ENCODE measurements at regions of chr17 and their contacts with region 1.

Region 1: DNA sequence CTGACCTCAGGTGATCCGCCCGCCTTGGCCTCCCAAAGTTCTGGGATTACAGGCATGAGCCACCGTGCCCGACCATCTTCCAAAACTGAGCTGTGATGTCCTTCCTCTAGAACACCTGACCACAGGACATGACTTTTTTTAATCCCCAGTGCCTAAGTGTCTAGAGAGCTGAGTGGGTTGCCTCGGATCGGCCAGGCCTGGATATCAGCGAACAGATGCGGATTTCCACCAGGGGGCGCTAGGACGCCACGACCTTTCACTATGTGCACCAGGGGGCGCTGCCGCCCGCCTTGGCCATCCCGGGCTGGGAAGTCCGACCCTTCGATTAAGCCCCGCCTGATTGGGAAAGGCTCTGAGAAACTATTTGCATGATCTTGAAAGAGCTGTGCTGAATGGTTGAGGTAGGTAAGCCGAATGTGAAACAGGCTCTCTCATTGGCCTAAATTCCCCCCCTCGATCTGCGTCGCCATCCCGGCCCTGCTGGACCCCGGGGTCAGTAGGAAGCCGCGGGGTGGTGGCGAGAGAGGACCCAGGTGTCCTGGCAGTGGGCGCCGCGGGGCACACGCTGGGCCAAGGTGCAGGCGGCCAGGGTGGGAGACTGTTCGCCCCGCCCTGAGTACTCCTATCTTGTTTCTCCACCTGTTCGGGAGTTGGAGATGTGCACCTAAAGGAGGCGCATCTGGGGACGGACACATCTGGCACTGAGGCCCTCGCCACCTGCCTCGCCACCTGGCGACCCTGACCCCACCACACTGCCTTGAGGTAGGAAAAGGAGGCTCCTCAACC is at the start of gene ACBD4:
- DNase-seq: peak; percentile 81 to 98 (median 90)
- ATAC-seq: peak; percentile 90
- H3K4me3 ChIP-seq: peak within 1 kb of the TSS; percentile 52
- H3K27ac ChIP-seq: peak within 1 kb of the TSS; percentile 74; the same call in 2 of the 3 replicates
- H3K4me1 ChIP-seq: peaks cover 11 to 49% of the 10 kb centered on the region in 2 experiments
- H3K27me3 ChIP-seq: no peaks in the 10 kb centered on the region
- CTCF ChIP-seq: peak; percentile 100
- EP300 ChIP-seq: peak; percentile 53; the same call in 1 of the 2 replicates
- POLR2A ChIP-seq: peak; percentile 55; the same call in 1 of the 2 replicates
- RAD21 ChIP-seq: peak; percentile 100
- polyA plus RNA-seq, gene ACBD4: 0.14 to 0.15 TPM

Region 2: GRCh38 chr17:44919885-44920564 is 215.4 kb before region 1 on chr17:
- CTCF ChIA-PET with region 1: interaction called, 4 read pairs
- POLR2A ChIA-PET with region 1: no interaction called
- in situ Hi-C with region 1: no loop called
- intact Hi-C with region 1: loop called (anchors 2 kb)
- DNase-seq: peak; percentile 78 to 86 (median 81)
- ATAC-seq: peak; percentile 96
- H3K4me3 ChIP-seq: no peak overlapping the region
- H3K27ac ChIP-seq: no peak overlapping the region
- H3K4me1 ChIP-seq: peaks cover 2 to 12% of the 10 kb centered on the region in 2 experiments; a peak in 4 of 5 replicates
- H3K27me3 ChIP-seq: peaks cover 2 to 13% of the 10 kb centered on the region in 2 experiments; a peak in 2 of 5 replicates
- CTCF ChIP-seq: peak; percentile 93 to 95 (median 93)
- EP300 ChIP-seq: no peak
- POLR2A ChIP-seq: no peak
- RAD21 ChIP-seq: peak; percentile 84 to 92

Region 3: DNA sequence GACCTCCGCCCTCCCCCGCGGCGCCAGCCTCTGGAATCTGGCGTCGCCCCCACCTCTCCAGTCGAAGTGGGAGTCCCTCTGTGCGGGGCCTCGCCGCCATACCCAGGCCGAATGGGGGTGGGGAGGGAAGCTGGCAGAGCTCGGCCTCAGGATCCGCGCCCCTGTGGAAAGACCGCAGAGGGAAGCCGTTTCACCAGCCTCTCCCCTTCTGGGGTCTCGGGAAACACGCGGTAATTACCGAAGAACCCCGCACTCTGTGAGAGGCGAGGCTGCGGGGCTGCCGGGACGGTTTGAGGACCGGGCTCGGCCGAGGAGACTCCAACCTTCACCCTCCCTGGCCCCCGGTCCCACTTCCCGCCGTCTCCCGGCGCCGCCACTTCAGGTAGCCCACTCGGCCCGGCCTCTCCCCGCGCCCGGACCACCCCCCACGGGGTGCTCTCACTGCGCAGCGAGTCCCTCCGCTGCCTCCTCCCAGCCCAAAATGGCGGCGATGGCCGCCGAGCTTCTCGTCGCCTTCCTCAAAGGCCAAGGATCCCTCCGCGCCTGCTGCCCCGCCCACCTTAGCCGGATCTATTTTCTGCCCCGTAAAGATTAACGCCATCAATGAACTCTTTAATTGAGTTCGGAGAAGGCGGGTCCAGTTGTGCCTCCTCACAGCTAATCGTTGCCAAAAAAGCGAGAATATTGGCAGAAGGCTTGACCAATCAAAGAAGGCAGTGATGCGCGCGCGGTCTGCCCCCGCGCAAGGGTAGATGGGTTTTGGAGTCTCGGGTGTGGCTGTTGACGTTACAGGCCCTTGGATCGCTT is 25.8 kb after region 1 on chr17:
- CTCF ChIA-PET with region 1: interaction called, 19 read pairs
- POLR2A ChIA-PET with region 1: interaction called, 7 read pairs
- in situ Hi-C with region 1: no loop called
- intact Hi-C with region 1: no loop called
- DNase-seq: peak; percentile 90 to 100 (median 95)
- ATAC-seq: peak; percentile 92
- H3K4me3 ChIP-seq: peak overlapping the region; percentile 86
- H3K27ac ChIP-seq: peak overlapping the region; percentile 98
- H3K4me1 ChIP-seq: peaks cover 38 to 39% of the 10 kb centered on the region in 2 experiments
- H3K27me3 ChIP-seq: no peaks in the 10 kb centered on the region
- CTCF ChIP-seq: no peak; a peak in 3 of 6 replicates
- EP300 ChIP-seq: peak; percentile 23
- POLR2A ChIP-seq: peak; percentile 94
- RAD21 ChIP-seq: 0 out of 4 replicates have a peak, but pooled peaks of 1 of the 2 experiments have one; percentile 4

Region 4: DNA sequence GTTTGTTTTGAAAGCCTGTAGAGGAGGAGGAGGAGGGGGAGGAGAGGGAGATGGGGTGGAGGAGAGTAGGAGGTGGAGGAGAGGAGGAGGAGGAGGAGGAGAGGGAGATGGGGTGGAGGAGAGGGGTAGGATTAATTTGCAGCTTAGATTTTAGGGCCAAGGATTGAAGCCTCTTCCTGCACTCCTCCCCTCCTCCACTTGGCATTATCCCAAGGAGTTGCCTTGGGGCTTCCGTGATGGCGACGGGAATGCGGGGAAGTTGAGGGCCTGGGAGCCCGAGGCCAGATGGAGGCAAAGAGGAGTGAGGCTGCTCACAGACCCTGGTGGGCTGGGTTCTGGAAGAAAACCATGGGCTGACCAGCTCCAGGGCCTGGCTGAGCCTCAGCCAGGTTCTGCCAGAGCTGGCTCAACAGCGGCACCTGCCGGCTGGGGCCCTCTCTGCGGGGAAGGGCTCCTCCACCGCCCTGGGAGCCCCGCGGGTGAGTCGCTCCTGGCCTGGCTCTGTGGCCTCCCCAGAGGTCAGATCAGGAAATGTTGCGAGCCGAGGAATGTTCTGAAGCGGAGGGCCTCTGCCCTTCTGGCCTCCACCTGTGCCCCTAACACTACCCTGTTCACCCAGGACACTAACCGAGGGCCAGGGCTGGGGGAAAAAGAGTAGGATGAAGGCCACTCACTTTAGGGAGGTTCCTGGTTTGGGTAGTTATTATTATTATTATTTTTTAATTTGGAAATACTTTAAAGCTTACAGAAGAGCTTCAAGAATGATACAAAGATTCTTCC is 62.4 kb after region 1 on chr17:
- CTCF ChIA-PET with region 1: interaction called, 165 read pairs
- POLR2A ChIA-PET with region 1: interaction called, 13 read pairs
- in situ Hi-C with region 1: loop called (anchors 5 kb)
- intact Hi-C with region 1: loop called (anchors 1 kb)
- DNase-seq: peak; percentile 91 to 96 (median 94)
- ATAC-seq: peak; percentile 100
- H3K4me3 ChIP-seq: no peak overlapping the region
- H3K27ac ChIP-seq: no peak overlapping the region
- H3K4me1 ChIP-seq: peaks cover 12 to 13% of the 10 kb centered on the region in 2 experiments
- H3K27me3 ChIP-seq: no peaks in the 10 kb centered on the region
- CTCF ChIP-seq: peak; percentile 100
- EP300 ChIP-seq: peak; percentile 28; the same call in 1 of the 2 replicates
- POLR2A ChIP-seq: no peak
- RAD21 ChIP-seq: peak; percentile 99

Region 5: DNA sequence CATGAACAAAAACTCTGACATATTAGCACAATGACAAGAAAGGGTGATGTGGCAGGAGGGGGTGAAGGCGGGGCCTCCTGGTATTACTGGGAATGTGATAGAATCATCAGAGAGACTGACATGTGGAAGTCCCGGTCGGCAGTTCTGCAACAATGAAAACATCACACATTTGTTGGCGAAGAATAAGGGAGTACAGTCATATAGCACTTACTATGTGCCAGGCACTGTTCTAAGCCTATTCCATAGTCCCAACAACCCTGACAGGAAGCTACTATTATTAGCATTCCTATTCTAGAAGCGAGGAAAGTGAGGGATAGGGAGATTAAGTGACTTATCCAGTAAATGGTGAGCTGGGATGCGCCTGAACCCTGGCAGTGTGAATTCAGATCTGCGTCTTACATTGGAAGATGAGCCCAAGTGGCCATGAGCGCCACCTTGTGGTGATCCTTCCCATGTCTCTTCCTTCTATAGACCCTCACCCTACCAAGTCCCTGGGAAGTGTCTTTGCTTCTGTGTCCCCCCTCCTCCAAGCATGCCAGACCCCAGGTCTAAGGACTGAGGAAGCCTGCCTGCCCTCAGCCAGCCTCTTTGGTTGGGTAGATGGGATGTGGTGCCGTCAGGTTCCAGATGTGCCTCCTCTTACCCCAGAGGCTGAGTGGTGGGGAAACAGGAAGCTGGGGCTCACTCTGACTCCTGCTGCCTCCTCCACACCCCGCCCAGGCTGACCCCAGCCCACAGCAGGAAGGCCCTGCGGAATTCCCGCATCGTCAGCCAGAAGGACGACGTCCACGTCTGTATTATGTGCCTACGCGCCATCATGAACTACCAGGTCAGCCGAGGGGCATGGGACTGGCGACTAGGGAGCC is 100.3 kb after region 1 on chr17:
- CTCF ChIA-PET with region 1: interaction called, 34 read pairs
- POLR2A ChIA-PET with region 1: interaction called, 3 read pairs
- in situ Hi-C with region 1: no loop called
- intact Hi-C with region 1: no loop called
- DNase-seq: peak; percentile 68 to 85 (median 72)
- ATAC-seq: peak; percentile 86
- H3K4me3 ChIP-seq: no peak overlapping the region
- H3K27ac ChIP-seq: no peak overlapping the region
- H3K4me1 ChIP-seq: peaks cover 4 to 26% of the 10 kb centered on the region in 2 experiments; a peak in 3 of 5 replicates
- H3K27me3 ChIP-seq: no peaks in the 10 kb centered on the region
- CTCF ChIP-seq: peak; percentile 77 to 90 (median 82)
- EP300 ChIP-seq: no peak
- POLR2A ChIP-seq: no peak
- RAD21 ChIP-seq: peak; percentile 55 to 78; a peak in 3 of 4 replicates

Region 6: GRCh38 chr17:45385331-45385997 is 250.1 kb after region 1 on chr17:
- CTCF ChIA-PET with region 1: interaction called, 5 read pairs
- POLR2A ChIA-PET with region 1: no interaction called
- in situ Hi-C with region 1: no loop called
- intact Hi-C with region 1: loop called (anchors 5 kb)
- DNase-seq: peak; percentile 85 to 92 (median 86)
- ATAC-seq: peak; percentile 99
- H3K4me3 ChIP-seq: no peak overlapping the region
- H3K27ac ChIP-seq: no peak overlapping the region
- H3K4me1 ChIP-seq: peaks cover 21 to 22% of the 10 kb centered on the region in 2 experiments
- H3K27me3 ChIP-seq: peaks cover 0 to 14% of the 10 kb centered on the region in 2 experiments; a peak in 3 of 5 replicates
- CTCF ChIP-seq: peak; percentile 96 to 99 (median 98)
- EP300 ChIP-seq: 0 out of 2 replicates have a peak, but pooled peaks have one; percentile 8
- POLR2A ChIP-seq: no peak
- RAD21 ChIP-seq: peak; percentile 99